ENCODE measurements at regions of chr16 and their contacts with region 1.

Region 1: GRCh38 chr16:29995911-29996772 is at the start of gene INO80E:
- DNase-seq: peak; percentile 98 to 99 (median 98)
- H3K4me3 ChIP-seq: peak within 1 kb of the TSS; percentile 72 to 97
- H3K4me3 Mint-ChIP-seq: peak within 1 kb of the TSS; percentile 95 to 98 (median 98)
- H3K27ac ChIP-seq: peak within 1 kb of the TSS; percentile 98
- H3K27ac Mint-ChIP-seq: peak within 1 kb of the TSS; percentile 97 to 99 (median 99)
- H3K4me1 ChIP-seq: peaks cover 23% of the 10 kb centered on the region
- H3K4me1 Mint-ChIP-seq: peaks cover 14 to 44% (median 32%) of the 10 kb centered on the region in 4 donors
- H3K27me3 ChIP-seq: no peaks in the 10 kb centered on the region
- H3K27me3 Mint-ChIP-seq: no peaks in the 10 kb centered on the region
- total RNA-seq, gene INO80E: 124 to 126 TPM

Region 2: GRCh38 chr16:29790183-29790952 is 205.8 kb before region 1 on chr16 and contains the start of gene KIF22:
- CTCF ChIA-PET with region 1: no interaction called
- POLR2A ChIA-PET with region 1: interaction called, 7 read pairs
- intact Hi-C with region 1: loop called (anchors 1 kb)
- DNase-seq: peak; percentile 99 to 100 (median 100)
- H3K4me3 ChIP-seq: peak within 1 kb of the TSS; percentile 90 to 98
- H3K4me3 Mint-ChIP-seq: peak within 1 kb of the TSS; percentile 97 to 100 (median 99)
- H3K27ac ChIP-seq: peak within 1 kb of the TSS; percentile 80
- H3K27ac Mint-ChIP-seq: peak within 1 kb of the TSS; percentile 96 to 99 (median 98)
- H3K4me1 ChIP-seq: peaks cover 43% of the 10 kb centered on the region
- H3K4me1 Mint-ChIP-seq: peaks cover 27 to 58% (median 43%) of the 10 kb centered on the region in 4 donors
- H3K27me3 ChIP-seq: no peaks in the 10 kb centered on the region
- H3K27me3 Mint-ChIP-seq: no peaks in the 10 kb centered on the region
- total RNA-seq, gene KIF22: 89.4 to 98.6 TPM

Region 3: GRCh38 chr16:29862884-29863668 is 133.1 kb before region 1 on chr16 and contains the start of gene CDIPT:
- CTCF ChIA-PET with region 1: no interaction called
- POLR2A ChIA-PET with region 1: interaction called, 14 read pairs
- intact Hi-C with region 1: loop called (anchors 1 kb)
- DNase-seq: peak; percentile 95 to 96 (median 95)
- H3K4me3 ChIP-seq: peak within 1 kb of the TSS; percentile 69 to 83
- H3K4me3 Mint-ChIP-seq: peak within 1 kb of the TSS; percentile 84 to 99 (median 96)
- H3K27ac ChIP-seq: peak within 1 kb of the TSS; percentile 89
- H3K27ac Mint-ChIP-seq: peak within 1 kb of the TSS; percentile 87 to 100 (median 98)
- H3K4me1 ChIP-seq: peaks cover 22% of the 10 kb centered on the region
- H3K4me1 Mint-ChIP-seq: peaks cover 4 to 34% (median 19%) of the 10 kb centered on the region in 4 donors
- H3K27me3 ChIP-seq: no peaks in the 10 kb centered on the region
- H3K27me3 Mint-ChIP-seq: no peaks in the 10 kb centered on the region
- total RNA-seq, gene CDIPT: 76.2 to 79.8 TPM

Region 4: GRCh38 chr16:29961479-29962343 is 34.4 kb before region 1 on chr16 and contains the start of gene TMEM219:
- CTCF ChIA-PET with region 1: interaction called, 4 read pairs
- POLR2A ChIA-PET with region 1: interaction called, 27 read pairs
- intact Hi-C with region 1: loop called (anchors 1 kb)
- DNase-seq: peak; percentile 92 to 98 (median 95)
- H3K4me3 ChIP-seq: peak within 1 kb of the TSS; percentile 75 to 89
- H3K4me3 Mint-ChIP-seq: peak within 1 kb of the TSS; percentile 88 to 95 (median 92)
- H3K27ac ChIP-seq: peak within 1 kb of the TSS; percentile 87
- H3K27ac Mint-ChIP-seq: peak within 1 kb of the TSS; percentile 92 to 99 (median 96)
- H3K4me1 ChIP-seq: peaks cover 19% of the 10 kb centered on the region
- H3K4me1 Mint-ChIP-seq: peaks cover 11 to 30% (median 20%) of the 10 kb centered on the region in 4 donors
- H3K27me3 ChIP-seq: no peaks in the 10 kb centered on the region
- H3K27me3 Mint-ChIP-seq: no peaks in the 10 kb centered on the region
- total RNA-seq, gene TMEM219: 80.8 to 103 TPM

Region 5: GRCh38 chr16:30065143-30065850 is 69.2 kb after region 1 on chr16 and contains the start of gene ALDOA:
- CTCF ChIA-PET with region 1: no interaction called
- POLR2A ChIA-PET with region 1: interaction called, 12 read pairs
- intact Hi-C with region 1: no loop called
- DNase-seq: peak; percentile 94 to 96 (median 94)
- H3K4me3 ChIP-seq: peak within 1 kb of the TSS; percentile 77 to 93
- H3K4me3 Mint-ChIP-seq: peak within 1 kb of the TSS; percentile 98 to 100 (median 99)
- H3K27ac ChIP-seq: peak within 1 kb of the TSS; percentile 94
- H3K27ac Mint-ChIP-seq: peak within 1 kb of the TSS; percentile 95 to 100 (median 97)
- H3K4me1 ChIP-seq: peaks cover 47% of the 10 kb centered on the region
- H3K4me1 Mint-ChIP-seq: peaks cover 17 to 58% (median 33%) of the 10 kb centered on the region in 4 donors
- H3K27me3 ChIP-seq: no peaks in the 10 kb centered on the region
- H3K27me3 Mint-ChIP-seq: no peaks in the 10 kb centered on the region
- total RNA-seq, gene ALDOA: 558 to 563 TPM

Measured in CD4-positive, alpha-beta memory T cell (primary cell).